Colonic mucosa (tissue), 4 donors: ENCODE measurements at regions of chr3 and their contacts with region 1.

Region 1: GRCh38 chr3:173826906-173827609 is 429.5 kb downstream of the NLGN1 start:
- DNase-seq: no peak
- H3K4me3 ChIP-seq: no peak overlapping the region
- H3K27ac ChIP-seq: no peak overlapping the region
- H3K4me1 ChIP-seq: no peaks in the 10 kb centered on the region
- H3K27me3 ChIP-seq: no peaks in the 10 kb centered on the region
- CTCF ChIP-seq: no peak

Region 2: GRCh38 chr3:173770011-173770410 is 57.0 kb before region 1 on chr3:
- intact Hi-C with region 1: no loop called
- DNase-seq: no peak
- H3K4me3 ChIP-seq: no peak overlapping the region
- H3K27ac ChIP-seq: no peak overlapping the region
- H3K4me1 ChIP-seq: no peaks in the 10 kb centered on the region
- H3K27me3 ChIP-seq: no peaks in the 10 kb centered on the region
- CTCF ChIP-seq: no peak

Region 3: GRCh38 chr3:173814809-173815208 is 12.2 kb before region 1 on chr3:
- intact Hi-C with region 1: loop called (anchors 1 kb)
- DNase-seq: no peak
- H3K4me3 ChIP-seq: no peak overlapping the region
- H3K27ac ChIP-seq: no peak overlapping the region
- H3K4me1 ChIP-seq: no peaks in the 10 kb centered on the region
- H3K27me3 ChIP-seq: no peaks in the 10 kb centered on the region
- CTCF ChIP-seq: no peak

Region 4: GRCh38 chr3:174667386-174667785 is 840.3 kb after region 1 on chr3:
- intact Hi-C with region 1: no loop called
- DNase-seq: no peak
- H3K4me3 ChIP-seq: no peak overlapping the region
- H3K27ac ChIP-seq: no peak overlapping the region
- H3K4me1 ChIP-seq: no peaks in the 10 kb centered on the region
- H3K27me3 ChIP-seq: no peaks in the 10 kb centered on the region
- CTCF ChIP-seq: no peak